GM12878 (cell line): ENCODE measurements at regions of chr3 and their contacts with region 1.

Region 1: GRCh38 chr3:23865595-23866450 is 51.0 kb downstream of the NKIRAS1 start:
- DNase-seq: peak; percentile 45
- ATAC-seq: peak; percentile 89
- H3K4me3 ChIP-seq: peak overlapping the region; percentile 10; the same call in 1 of the 2 replicates
- H3K27ac ChIP-seq: peak overlapping the region; percentile 63
- H3K4me1 ChIP-seq: peaks cover 22% of the 10 kb centered on the region
- H3K27me3 ChIP-seq: no peaks in the 10 kb centered on the region
- CTCF ChIP-seq: no peak
- EP300 ChIP-seq: peak; percentile 63 to 77; a peak in 2 of 4 replicates
- POLR2A ChIP-seq: no peak
- RAD21 ChIP-seq: no peak

Region 2: DNA sequence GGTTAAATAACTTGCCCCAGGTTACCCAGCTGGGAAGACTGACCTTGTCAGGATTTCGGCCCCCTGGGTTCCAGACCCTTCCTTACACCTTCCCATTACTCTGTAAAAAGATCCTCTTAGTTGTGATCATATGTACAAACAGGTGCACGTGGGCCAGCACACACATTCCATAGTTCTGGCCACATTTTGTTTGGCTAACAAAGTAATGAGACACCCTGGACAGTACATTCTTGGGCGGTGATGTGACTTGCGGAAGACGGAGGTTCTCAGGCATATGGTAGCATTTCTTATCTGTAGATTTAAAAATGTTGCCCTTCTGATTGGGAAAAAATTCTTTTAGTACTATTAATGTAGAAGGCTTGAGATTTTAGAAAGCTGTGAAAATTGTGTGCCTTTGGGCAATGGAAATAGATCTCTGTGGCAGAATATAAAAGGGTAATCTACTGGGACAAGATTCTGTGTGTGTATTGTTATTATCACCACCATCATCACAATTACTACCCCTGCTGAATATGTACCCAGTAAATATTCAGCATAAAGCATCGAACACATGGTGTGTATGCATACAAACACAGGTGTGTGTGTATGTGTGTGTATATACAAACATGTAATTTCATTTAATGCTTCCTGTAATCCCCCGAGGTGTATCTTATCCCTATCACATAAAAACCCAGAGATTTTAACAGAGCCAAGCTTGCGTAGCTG is 265.5 kb before region 1 on chr3:
- CTCF ChIA-PET with region 1: no interaction called
- POLR2A ChIA-PET with region 1: no interaction called
- RAD21 ChIA-PET with region 1: no interaction called
- SMC1A ChIA-PET with region 1: no interaction called
- in situ Hi-C with region 1: no loop called
- intact Hi-C with region 1: no loop called
- DNase-seq: no peak
- ATAC-seq: no peak
- H3K4me3 ChIP-seq: no peak overlapping the region
- H3K27ac ChIP-seq: no peak overlapping the region
- H3K4me1 ChIP-seq: no peaks in the 10 kb centered on the region
- H3K27me3 ChIP-seq: no peaks in the 10 kb centered on the region
- CTCF ChIP-seq: no peak
- EP300 ChIP-seq: no peak
- POLR2A ChIP-seq: no peak
- RAD21 ChIP-seq: no peak

Region 3: GRCh38 chr3:23776352-23776891 is 89.4 kb before region 1 on chr3:
- CTCF ChIA-PET with region 1: no interaction called
- POLR2A ChIA-PET with region 1: interaction called, 11 read pairs
- RAD21 ChIA-PET with region 1: no interaction called
- SMC1A ChIA-PET with region 1: no interaction called
- in situ Hi-C with region 1: no loop called
- intact Hi-C with region 1: no loop called
- DNase-seq: no peak
- ATAC-seq: no peak
- H3K4me3 ChIP-seq: no peak overlapping the region
- H3K27ac ChIP-seq: no peak overlapping the region
- H3K4me1 ChIP-seq: peaks cover 10% of the 10 kb centered on the region; the same call in 1 of the 2 replicates
- H3K27me3 ChIP-seq: no peaks in the 10 kb centered on the region; a peak in 1 of 4 replicates
- CTCF ChIP-seq: no peak
- EP300 ChIP-seq: no peak
- POLR2A ChIP-seq: no peak
- RAD21 ChIP-seq: no peak

Region 4: GRCh38 chr3:23826382-23827064 is 39.3 kb before region 1 on chr3:
- CTCF ChIA-PET with region 1: interaction called, 7 read pairs
- POLR2A ChIA-PET with region 1: interaction called, 5 read pairs
- RAD21 ChIA-PET with region 1: interaction called, 21 read pairs
- SMC1A ChIA-PET with region 1: interaction called, 171 read pairs
- in situ Hi-C with region 1: no loop called
- intact Hi-C with region 1: loop called (anchors 5 kb)
- DNase-seq: no peak
- ATAC-seq: no peak
- H3K4me3 ChIP-seq: no peak overlapping the region
- H3K27ac ChIP-seq: peak overlapping the region; percentile 52; the same call in 1 of the 2 replicates
- H3K4me1 ChIP-seq: peaks cover 42% of the 10 kb centered on the region
- H3K27me3 ChIP-seq: no peaks in the 10 kb centered on the region
- CTCF ChIP-seq: no peak
- EP300 ChIP-seq: no peak
- POLR2A ChIP-seq: no peak
- RAD21 ChIP-seq: no peak

Region 5: DNA sequence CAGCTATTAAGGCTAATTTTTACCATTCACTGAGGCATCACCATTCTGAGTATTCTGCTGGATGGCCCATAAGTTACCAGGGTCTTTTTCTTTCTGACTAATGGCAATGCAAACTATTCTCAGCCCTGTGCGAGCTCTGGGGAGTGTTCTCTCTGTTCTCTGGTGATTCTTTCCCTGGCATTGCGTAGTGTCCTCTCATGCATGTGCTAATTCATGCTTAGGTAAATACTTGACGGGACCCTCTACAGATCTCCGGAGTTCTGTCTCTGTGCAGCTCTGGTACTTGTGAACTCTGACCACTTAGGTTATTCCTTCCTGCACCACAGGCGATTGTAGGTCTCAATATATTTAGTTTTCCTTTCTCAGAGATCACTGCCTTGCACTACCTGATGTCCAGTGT is 25.3 kb before region 1 on chr3:
- CTCF ChIA-PET with region 1: interaction called, 94 read pairs
- POLR2A ChIA-PET with region 1: interaction called, 3 read pairs
- RAD21 ChIA-PET with region 1: interaction called, 25 read pairs
- SMC1A ChIA-PET with region 1: interaction called, 171 read pairs
- in situ Hi-C with region 1: no loop called
- intact Hi-C with region 1: no loop called
- DNase-seq: no peak
- ATAC-seq: no peak
- H3K4me3 ChIP-seq: no peak overlapping the region
- H3K27ac ChIP-seq: no peak overlapping the region
- H3K4me1 ChIP-seq: peaks cover 26% of the 10 kb centered on the region
- H3K27me3 ChIP-seq: no peaks in the 10 kb centered on the region
- CTCF ChIP-seq: no peak
- EP300 ChIP-seq: no peak
- POLR2A ChIP-seq: no peak
- RAD21 ChIP-seq: no peak

Region 6: DNA sequence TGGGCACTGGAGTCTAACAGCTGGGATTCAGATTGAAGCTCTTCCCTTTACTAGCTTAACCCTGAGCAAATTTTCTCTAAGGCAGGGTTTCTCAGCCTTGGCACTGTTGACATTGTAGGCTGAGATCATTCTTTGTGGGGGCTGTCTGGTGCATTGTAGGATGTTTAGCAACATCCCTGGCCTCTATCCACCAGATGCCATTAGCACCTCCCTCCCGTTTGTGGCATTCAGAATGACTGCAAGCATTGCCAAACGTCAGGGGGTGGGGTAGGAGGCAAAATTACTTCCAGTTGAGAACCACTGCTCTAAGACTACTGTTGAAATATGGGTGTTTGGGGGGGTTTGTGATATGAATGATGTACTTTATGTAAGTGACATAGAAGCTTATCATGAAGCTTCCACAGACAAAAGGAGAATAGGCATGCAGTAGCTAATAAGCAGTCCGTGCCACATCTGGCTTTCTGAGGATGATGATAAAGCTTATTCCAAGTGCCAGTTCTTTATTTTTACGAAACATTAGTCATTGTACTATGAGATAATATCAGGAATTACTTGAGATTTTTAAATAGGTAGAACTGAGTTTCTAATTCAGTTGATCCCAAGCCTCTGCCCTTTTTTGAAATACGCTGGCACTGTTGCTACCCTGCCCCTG is 11.6 kb after region 1 on chr3:
- CTCF ChIA-PET with region 1: interaction called, 9 read pairs
- POLR2A ChIA-PET with region 1: no interaction called
- RAD21 ChIA-PET with region 1: no interaction called
- SMC1A ChIA-PET with region 1: interaction called, 11 read pairs
- in situ Hi-C with region 1: no loop called
- intact Hi-C with region 1: no loop called
- DNase-seq: no peak
- ATAC-seq: no peak
- H3K4me3 ChIP-seq: no peak overlapping the region
- H3K27ac ChIP-seq: no peak overlapping the region
- H3K4me1 ChIP-seq: no peaks in the 10 kb centered on the region
- H3K27me3 ChIP-seq: no peaks in the 10 kb centered on the region
- CTCF ChIP-seq: no peak
- EP300 ChIP-seq: no peak
- POLR2A ChIP-seq: no peak
- RAD21 ChIP-seq: no peak

Region 7: DNA sequence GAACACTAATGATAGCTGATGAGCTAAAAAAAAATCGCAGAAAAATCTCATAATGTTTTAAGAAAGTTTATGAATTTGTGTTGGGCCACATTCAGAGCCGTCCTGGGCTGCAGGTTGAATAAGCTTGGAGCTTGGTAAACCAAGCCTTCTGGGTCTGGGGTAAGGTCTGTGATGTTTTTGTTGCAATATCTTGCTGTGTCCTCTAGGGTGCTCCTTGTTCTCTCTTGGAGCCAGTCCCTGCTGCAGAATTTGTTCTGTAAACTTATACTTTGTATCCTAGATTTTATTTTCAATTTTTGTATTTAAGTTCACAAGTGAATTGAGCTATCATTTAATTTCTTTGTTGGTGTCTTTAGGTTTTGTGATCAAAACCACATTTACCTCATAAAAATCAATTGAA is 223.0 kb after region 1 on chr3:
- CTCF ChIA-PET with region 1: no interaction called
- POLR2A ChIA-PET with region 1: no interaction called
- RAD21 ChIA-PET with region 1: no interaction called
- SMC1A ChIA-PET with region 1: no interaction called
- in situ Hi-C with region 1: no loop called
- intact Hi-C with region 1: no loop called
- DNase-seq: no peak
- ATAC-seq: peak; percentile 78
- H3K4me3 ChIP-seq: no peak overlapping the region
- H3K27ac ChIP-seq: no peak overlapping the region
- H3K4me1 ChIP-seq: no peaks in the 10 kb centered on the region
- H3K27me3 ChIP-seq: no peaks in the 10 kb centered on the region; a peak in 1 of 4 replicates
- CTCF ChIP-seq: peak; percentile 13 to 47 (median 36); a peak in 5 of 6 replicates
- EP300 ChIP-seq: no peak
- POLR2A ChIP-seq: no peak
- RAD21 ChIP-seq: peak; percentile 24; the same call in 1 of the 2 replicates